WTC11 (cell line): ENCODE measurements at regions of chr16 and their contacts with region 1.

Region 1: DNA sequence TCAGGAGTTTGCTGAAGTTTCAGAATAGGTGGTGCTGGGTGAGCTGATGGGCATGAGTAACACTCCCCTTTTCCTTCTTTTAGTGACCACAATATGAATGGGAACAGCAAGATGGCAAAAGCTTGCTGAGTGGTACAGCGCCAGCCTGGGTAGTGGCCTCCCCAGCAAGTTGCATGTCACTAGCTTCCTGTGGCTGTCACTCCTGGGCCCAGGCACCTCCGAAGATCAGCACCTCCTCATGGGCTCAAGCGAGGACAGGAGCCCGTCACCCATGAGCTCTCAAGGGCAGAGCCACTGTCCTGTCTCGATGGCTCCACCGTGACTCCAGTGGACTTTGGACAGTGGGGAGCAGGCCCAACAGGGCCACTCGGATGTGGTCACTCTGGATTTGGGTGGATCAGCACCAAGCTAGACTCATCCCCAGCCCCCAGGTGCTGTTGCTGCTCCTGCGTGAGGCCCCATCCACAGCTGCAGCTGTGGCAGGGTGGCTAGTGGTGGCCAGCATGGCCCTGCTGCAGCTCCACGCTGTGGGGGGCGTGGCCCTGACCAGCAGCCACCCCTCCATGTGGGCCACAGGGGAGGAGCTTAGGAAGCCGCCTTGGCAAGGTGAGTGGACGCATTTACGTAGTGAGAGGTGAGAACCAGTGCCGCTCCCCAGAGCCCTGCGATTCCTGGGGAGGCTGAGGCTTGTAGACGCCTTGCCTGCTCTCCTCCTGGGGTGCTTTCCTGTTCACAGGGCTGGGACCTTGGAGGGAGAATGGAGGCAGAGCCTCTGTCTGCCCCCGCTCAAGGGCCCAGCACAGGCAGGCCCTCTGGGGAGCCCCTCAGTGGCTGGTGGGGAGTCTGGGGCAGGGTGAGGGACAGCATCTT is 13.6 kb upstream of the DNASE1 start:
- DNase-seq: peak; percentile 26
- ATAC-seq: no peak
- H3K4me3 Mint-ChIP-seq: no peak overlapping the region
- H3K27ac Mint-ChIP-seq: peak overlapping the region; percentile 30
- H3K4me1 Mint-ChIP-seq: peaks cover 62% of the 10 kb centered on the region
- H3K27me3 Mint-ChIP-seq: no peaks in the 10 kb centered on the region
- CTCF ChIP-seq: no peak

Region 2: GRCh38 chr16:3654249-3654991 is 13.6 kb after region 1 on chr16 and contains the start of gene DNASE1:
- CTCF ChIA-PET with region 1: interaction called, 10 read pairs
- POLR2A ChIA-PET with region 1: no interaction called
- DNase-seq: peak; percentile 81
- ATAC-seq: peak; percentile 68
- H3K4me3 Mint-ChIP-seq: no peak within 1 kb of the TSS
- H3K27ac Mint-ChIP-seq: peak within 1 kb of the TSS; percentile 87
- H3K4me1 Mint-ChIP-seq: peaks cover 33% of the 10 kb centered on the region
- H3K27me3 Mint-ChIP-seq: no peaks in the 10 kb centered on the region
- CTCF ChIP-seq: peak; percentile 84
- total RNA-seq, gene DNASE1: 13.5 to 15.7 TPM (median 13.9 TPM) in 3 replicates